ENCODE measurements at regions of chr3 and their contacts with region 1.

Region 1: GRCh38 chr3:43180027-43180426 is 74.1 kb upstream of the POMGNT2 start:
- DNase-seq: peak; percentile 17 to 54 (median 50)
- H3K4me3 ChIP-seq: peak overlapping the region in 6 of 7 experiments; percentile 1 to 55 (median 16)
- H3K27ac ChIP-seq: peak overlapping the region; percentile 4 to 32
- H3K4me1 ChIP-seq: peaks cover 23 to 55% (median 48%) of the 10 kb centered on the region in 4 experiments
- H3K27me3 ChIP-seq: no peaks in the 10 kb centered on the region

Region 2: GRCh38 chr3:43043071-43043766 is 136.8 kb before region 1 on chr3:
- CTCF ChIA-PET with region 1: no interaction called
- POLR2A ChIA-PET with region 1: no interaction called
- DNase-seq: no peak
- H3K4me3 ChIP-seq: no peak overlapping the region
- H3K27ac ChIP-seq: no peak overlapping the region
- H3K4me1 ChIP-seq: no peaks in the 10 kb centered on the region
- H3K27me3 ChIP-seq: no peaks in the 10 kb centered on the region

Region 3: GRCh38 chr3:43162230-43163084 is 17.6 kb before region 1 on chr3:
- CTCF ChIA-PET with region 1: interaction called, 24 read pairs
- POLR2A ChIA-PET with region 1: no interaction called
- DNase-seq: peak; percentile 48 to 69 (median 66)
- H3K4me3 ChIP-seq: peak overlapping the region in 2 of 7 experiments; percentile 19 to 23
- H3K27ac ChIP-seq: no peak overlapping the region
- H3K4me1 ChIP-seq: peaks cover 0 to 13% (median 6%) of the 10 kb centered on the region in 4 experiments
- H3K27me3 ChIP-seq: no peaks in the 10 kb centered on the region

Measured in common myeloid progenitor, CD34-positive (primary cell).